ENCODE measurements at regions of chr12 and their contacts with region 1.

Region 1: GRCh38 chr12:92145731-92146496 is at the start of gene BTG1:
- DNase-seq: peak; percentile 89
- ATAC-seq: peak; percentile 75
- H3K4me3 Mint-ChIP-seq: peak within 1 kb of the TSS; percentile 98
- H3K27ac Mint-ChIP-seq: peak within 1 kb of the TSS; percentile 99
- H3K4me1 Mint-ChIP-seq: peaks cover 39% of the 10 kb centered on the region
- H3K27me3 Mint-ChIP-seq: no peaks in the 10 kb centered on the region
- CTCF ChIP-seq: no peak
- total RNA-seq, gene BTG1: 423 and 429 TPM in 2 replicates

Region 2: DNA sequence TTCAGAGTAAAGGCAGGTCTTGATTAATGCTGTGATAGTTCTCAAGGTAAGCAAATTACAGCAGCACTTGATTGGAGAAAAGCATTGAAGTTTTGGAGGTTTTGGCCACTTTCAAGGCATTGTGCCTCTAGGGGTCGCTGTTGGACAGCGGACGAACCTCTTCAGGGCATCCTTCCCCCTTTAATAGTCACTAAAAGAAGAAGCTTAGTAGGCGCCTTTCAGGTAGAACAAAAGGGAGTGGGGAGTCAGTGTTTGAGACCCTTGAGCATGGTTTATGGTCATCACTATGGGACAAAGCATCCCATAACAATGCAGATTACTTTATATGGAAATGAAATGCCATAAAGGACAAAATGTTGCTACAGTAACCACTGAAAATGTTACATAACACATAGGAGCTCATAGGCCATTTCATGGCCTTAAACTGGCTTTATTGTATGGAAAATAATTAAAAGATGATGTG is 763.8 kb before region 1 on chr12:
- CTCF ChIA-PET with region 1: interaction called, 20 read pairs
- POLR2A ChIA-PET with region 1: interaction called, 15 read pairs
- intact Hi-C with region 1: loop called (anchors 1 kb)
- DNase-seq: peak; percentile 63
- ATAC-seq: peak; percentile 78
- H3K4me3 Mint-ChIP-seq: peak overlapping the region; percentile 76
- H3K27ac Mint-ChIP-seq: peak overlapping the region; percentile 35
- H3K4me1 Mint-ChIP-seq: peaks cover 4% of the 10 kb centered on the region
- H3K27me3 Mint-ChIP-seq: no peaks in the 10 kb centered on the region
- CTCF ChIP-seq: peak; percentile 62

Region 3: DNA sequence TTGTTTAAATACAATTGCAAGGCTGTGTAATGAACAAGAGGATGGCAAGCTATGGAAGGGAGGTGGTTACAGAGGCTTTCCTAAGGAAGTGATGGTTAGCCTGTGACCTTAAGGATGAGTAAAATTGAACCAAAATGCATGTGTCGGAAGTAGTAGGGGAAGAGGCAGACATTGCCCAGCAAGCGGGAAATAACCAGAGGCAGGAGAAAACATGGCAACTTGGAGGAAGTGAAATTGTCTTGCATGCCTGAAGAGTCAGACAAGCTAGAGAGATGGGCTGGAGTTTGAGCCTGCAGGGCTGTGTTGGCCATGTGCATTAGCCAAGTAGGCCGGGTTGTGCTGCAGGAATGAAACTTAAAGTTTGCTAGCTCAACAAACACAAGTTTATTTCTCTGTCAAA is 96.5 kb before region 1 on chr12:
- CTCF ChIA-PET with region 1: no interaction called
- POLR2A ChIA-PET with region 1: interaction called, 10 read pairs
- intact Hi-C with region 1: no loop called
- DNase-seq: no peak
- ATAC-seq: peak; percentile 90
- H3K4me3 Mint-ChIP-seq: peak overlapping the region; percentile 16
- H3K27ac Mint-ChIP-seq: peak overlapping the region; percentile 7
- H3K4me1 Mint-ChIP-seq: peaks cover 33% of the 10 kb centered on the region
- H3K27me3 Mint-ChIP-seq: no peaks in the 10 kb centered on the region
- CTCF ChIP-seq: no peak

Region 4: GRCh38 chr12:92218394-92219077 is 72.6 kb after region 1 on chr12:
- CTCF ChIA-PET with region 1: no interaction called
- POLR2A ChIA-PET with region 1: interaction called, 28 read pairs
- intact Hi-C with region 1: no loop called
- DNase-seq: no peak
- ATAC-seq: peak; percentile 87
- H3K4me3 Mint-ChIP-seq: peak overlapping the region; percentile 5
- H3K27ac Mint-ChIP-seq: peak overlapping the region; percentile 46
- H3K4me1 Mint-ChIP-seq: peaks cover 23% of the 10 kb centered on the region
- H3K27me3 Mint-ChIP-seq: no peaks in the 10 kb centered on the region
- CTCF ChIP-seq: no peak

Region 5: DNA sequence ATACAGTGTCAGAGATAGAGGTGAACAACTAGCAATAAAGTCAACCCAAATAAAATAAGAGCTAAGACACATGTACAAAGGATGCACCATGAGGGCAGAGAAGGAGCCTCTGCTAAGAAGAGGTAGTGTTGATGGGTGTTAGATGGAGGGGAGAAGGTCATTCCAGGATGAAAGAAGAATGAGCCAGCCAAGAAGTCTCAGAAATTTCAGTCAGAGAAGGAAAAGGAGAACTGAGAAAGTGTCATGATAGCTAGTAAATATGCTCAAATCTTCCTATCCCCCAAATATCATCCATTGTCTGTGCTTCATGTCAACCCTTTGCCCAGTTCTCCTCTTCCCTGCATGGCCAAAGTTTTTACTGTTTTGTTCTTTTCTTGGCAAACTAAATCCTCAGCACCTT is 224.9 kb after region 1 on chr12:
- CTCF ChIA-PET with region 1: no interaction called
- POLR2A ChIA-PET with region 1: interaction called, 344 read pairs
- intact Hi-C with region 1: no loop called
- DNase-seq: no peak
- ATAC-seq: peak; percentile 54
- H3K4me3 Mint-ChIP-seq: no peak overlapping the region
- H3K27ac Mint-ChIP-seq: peak overlapping the region; percentile 38
- H3K4me1 Mint-ChIP-seq: peaks cover 27% of the 10 kb centered on the region
- H3K27me3 Mint-ChIP-seq: no peaks in the 10 kb centered on the region
- CTCF ChIP-seq: no peak

Region 6: DNA sequence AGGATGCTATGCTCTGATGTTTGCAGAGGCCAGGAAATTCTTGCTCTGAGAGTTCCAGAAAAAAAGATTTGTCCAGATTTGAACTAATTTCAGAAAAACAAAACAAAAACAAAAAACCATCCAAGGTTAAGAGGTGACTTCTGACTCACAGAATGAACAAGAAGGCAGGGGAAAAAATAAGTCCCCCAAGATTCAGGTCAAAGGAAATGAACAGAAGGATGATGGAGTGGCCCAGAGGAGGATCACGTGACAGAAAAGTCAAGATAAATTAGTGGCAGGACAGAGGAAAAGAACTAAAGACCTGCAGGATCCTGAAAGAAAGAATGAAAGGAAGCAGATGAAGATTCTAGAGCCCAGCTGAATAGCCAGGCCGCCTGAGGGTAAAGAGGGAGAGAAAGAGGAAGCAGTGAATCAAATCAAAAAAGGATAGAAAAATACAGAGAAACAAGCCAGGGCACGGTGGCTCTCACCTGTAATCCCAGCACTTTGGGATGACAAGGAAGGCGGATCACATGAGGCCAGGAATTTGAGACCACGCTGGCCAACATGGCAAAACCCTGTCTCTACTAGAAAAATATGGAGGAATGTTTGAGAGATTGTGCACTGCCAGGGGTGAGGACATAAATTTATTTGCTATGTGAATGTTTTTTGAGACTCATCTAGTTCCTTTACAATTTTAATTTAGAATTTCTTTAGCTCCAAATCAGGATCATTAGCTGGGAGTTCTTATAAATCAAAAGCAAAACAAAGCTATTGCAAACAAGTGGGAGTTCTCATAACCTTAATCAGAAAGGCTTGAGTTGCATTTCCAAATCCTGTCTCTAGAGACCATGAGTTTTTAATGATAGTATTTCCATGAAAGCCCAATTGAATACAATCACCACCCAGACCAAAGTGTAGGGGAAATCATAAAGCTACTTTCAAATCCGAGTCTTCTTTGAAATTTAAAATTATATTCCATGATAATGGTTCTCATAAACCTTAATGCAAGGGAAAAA is 339.7 kb after region 1 on chr12:
- CTCF ChIA-PET with region 1: interaction called, 4 read pairs
- POLR2A ChIA-PET with region 1: interaction called, 32 read pairs
- intact Hi-C with region 1: loop called (anchors 5 kb)
- DNase-seq: no peak
- ATAC-seq: peak; percentile 41
- H3K4me3 Mint-ChIP-seq: peak overlapping the region; percentile 50
- H3K27ac Mint-ChIP-seq: peak overlapping the region; percentile 85
- H3K4me1 Mint-ChIP-seq: peaks cover 88% of the 10 kb centered on the region
- H3K27me3 Mint-ChIP-seq: no peaks in the 10 kb centered on the region
- CTCF ChIP-seq: no peak

Region 7: DNA sequence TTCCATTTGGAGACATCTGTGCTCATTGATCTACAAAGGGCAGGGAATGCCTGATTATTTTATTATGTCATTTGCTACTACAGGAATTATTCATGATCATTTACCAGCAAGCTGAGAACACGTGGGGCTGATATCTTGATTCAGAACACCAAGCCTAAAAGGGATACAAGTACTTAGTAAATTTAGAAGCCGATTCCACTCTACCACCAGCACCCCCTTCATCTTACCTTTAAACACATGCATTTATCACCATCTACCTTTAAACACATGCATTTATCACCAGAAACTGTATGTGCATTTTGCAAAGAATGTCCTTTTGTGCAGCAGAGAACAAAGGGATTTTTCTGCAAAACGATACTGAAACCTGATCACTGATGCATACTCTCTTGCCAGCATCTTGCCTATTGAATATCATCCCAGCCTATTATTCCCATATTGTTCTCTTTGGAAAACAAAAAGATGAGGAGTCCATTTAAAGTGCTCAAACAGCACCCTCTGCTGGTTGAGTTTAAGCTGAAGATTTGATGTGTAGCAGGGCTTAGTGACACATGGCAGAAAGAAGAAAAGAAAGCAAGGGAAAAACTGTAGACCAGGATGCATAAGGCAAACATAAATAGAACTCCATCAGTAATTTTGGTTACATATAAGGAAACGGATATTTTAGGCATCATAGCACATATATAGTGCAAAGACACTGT is 424.3 kb after region 1 on chr12:
- CTCF ChIA-PET with region 1: interaction called, 29 read pairs
- POLR2A ChIA-PET with region 1: interaction called, 126 read pairs
- intact Hi-C with region 1: loop called (anchors 1 kb)
- DNase-seq: no peak
- ATAC-seq: peak; percentile 95
- H3K4me3 Mint-ChIP-seq: no peak overlapping the region
- H3K27ac Mint-ChIP-seq: no peak overlapping the region
- H3K4me1 Mint-ChIP-seq: peaks cover 28% of the 10 kb centered on the region
- H3K27me3 Mint-ChIP-seq: no peaks in the 10 kb centered on the region
- CTCF ChIP-seq: peak; percentile 99